ENCODE measurements at regions of chr6 and their contacts with region 1.

Region 1: DNA sequence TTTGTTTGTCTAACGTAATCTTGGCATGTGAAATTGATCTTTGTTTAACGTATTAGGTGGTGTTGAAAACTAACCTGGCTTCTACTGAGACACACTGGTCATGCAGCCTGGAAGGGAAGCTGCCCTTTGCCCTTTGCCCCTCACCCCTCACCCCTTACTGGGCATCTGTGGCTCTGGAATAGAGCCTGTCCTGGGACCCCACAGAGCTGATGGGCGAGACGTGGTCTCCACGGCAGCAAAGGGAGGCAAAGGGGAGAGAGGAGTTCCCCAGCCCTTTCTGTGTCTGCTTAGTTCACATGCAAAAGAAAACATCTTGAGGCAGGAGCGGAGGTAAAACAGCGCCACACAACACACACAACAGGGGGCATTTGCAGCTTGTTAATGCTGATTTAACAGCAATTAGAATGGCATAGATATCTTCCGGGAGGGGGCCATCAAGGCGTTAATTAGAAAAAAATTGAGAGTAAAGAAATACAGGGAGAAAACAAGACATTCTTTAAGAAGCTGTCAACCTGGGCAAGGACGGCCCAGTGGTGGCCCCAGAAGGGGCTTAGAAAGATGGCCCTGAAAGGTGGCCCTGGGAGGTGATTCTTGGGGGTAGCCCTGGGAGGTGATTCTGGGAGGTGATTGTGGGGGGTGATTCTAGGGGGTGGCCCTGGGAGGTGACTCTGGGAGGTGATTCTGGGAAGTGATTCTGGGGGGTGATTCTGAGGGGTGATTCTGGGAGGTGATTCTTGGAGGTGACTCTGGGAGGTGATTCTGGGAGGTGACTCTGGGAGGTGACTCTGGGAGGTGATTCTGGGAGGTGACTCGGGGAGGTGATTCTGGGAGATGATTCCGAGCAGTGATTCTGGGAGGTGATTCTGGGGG is 44.5 kb upstream of the DACT2 start:
- DNase-seq: no peak
- H3K4me3 ChIP-seq: no peak overlapping the region
- H3K4me3 Mint-ChIP-seq: no peak overlapping the region
- H3K27ac Mint-ChIP-seq: no peak overlapping the region
- H3K4me1 ChIP-seq: no peaks in the 10 kb centered on the region
- H3K4me1 Mint-ChIP-seq: no peaks in the 10 kb centered on the region
- H3K27me3 ChIP-seq: no peaks in the 10 kb centered on the region
- H3K27me3 Mint-ChIP-seq: no peaks in the 10 kb centered on the region
- CTCF ChIP-seq: no peak

Region 2: DNA sequence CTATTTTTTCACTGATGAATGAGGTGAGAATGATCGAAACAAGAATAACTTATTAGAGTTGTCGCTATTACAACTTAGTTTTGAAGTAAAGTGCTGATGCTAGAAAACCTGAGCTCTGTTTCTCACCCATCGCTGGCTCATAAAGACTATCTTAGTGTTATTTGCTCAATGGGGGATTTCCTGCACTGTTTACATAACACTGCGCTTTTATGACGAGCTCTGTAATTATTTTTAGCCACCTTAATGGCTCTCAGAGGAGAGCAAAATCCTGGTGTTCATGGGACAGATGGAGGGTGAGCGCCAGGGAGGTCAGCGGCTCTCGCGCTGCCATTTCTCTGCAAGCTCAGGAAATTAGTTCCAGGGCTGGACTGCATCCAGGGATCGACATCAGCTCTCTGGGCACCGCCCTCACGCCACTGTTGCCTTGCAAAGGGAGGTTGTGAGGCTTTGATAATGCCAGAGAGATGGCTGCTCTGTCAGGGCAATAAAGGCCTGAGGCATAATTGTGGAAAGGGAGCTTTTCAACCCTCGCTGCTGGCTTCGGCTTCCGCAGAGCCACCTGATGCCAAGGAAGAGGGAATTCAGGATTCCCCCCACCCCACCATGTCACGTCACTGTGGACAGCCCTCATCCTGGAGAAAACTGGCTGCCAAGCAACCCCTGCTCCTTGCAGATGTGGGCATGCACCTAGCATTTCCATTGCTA is 116.5 kb before region 1 on chr6:
- CTCF ChIA-PET with region 1: interaction called, 17 read pairs
- POLR2A ChIA-PET with region 1: no interaction called
- intact Hi-C with region 1: no loop called
- DNase-seq: no peak
- H3K4me3 ChIP-seq: no peak overlapping the region
- H3K4me3 Mint-ChIP-seq: peak overlapping the region; percentile 20
- H3K27ac Mint-ChIP-seq: no peak overlapping the region
- H3K4me1 ChIP-seq: peaks cover 31% of the 10 kb centered on the region
- H3K4me1 Mint-ChIP-seq: peaks cover 15% of the 10 kb centered on the region
- H3K27me3 ChIP-seq: no peaks in the 10 kb centered on the region
- H3K27me3 Mint-ChIP-seq: no peaks in the 10 kb centered on the region
- CTCF ChIP-seq: no peak

Region 3: DNA sequence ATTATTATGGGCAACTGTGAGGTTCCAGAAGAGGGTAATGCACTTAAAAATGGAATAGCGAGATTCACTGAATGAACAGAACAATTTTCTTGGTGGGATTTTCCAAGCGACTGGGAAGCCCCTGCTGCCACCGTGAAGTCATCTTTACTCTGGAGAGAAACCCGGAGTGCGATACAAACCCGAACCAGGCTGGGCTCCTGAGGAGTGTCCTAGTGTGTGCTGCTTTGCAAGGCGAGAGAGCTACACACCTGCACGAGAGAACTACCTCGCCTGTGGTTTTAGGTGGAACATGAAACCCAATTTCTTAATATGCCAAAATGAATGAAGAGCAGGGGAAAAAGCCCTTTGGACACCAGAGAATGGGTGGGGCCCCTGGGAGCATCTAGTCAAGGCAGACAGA is 11.0 kb before region 1 on chr6:
- CTCF ChIA-PET with region 1: no interaction called
- POLR2A ChIA-PET with region 1: no interaction called
- intact Hi-C with region 1: no loop called
- DNase-seq: no peak
- H3K4me3 ChIP-seq: no peak overlapping the region
- H3K4me3 Mint-ChIP-seq: no peak overlapping the region
- H3K27ac Mint-ChIP-seq: no peak overlapping the region
- H3K4me1 ChIP-seq: no peaks in the 10 kb centered on the region
- H3K4me1 Mint-ChIP-seq: no peaks in the 10 kb centered on the region
- H3K27me3 ChIP-seq: no peaks in the 10 kb centered on the region
- H3K27me3 Mint-ChIP-seq: no peaks in the 10 kb centered on the region
- CTCF ChIP-seq: no peak

Region 4: DNA sequence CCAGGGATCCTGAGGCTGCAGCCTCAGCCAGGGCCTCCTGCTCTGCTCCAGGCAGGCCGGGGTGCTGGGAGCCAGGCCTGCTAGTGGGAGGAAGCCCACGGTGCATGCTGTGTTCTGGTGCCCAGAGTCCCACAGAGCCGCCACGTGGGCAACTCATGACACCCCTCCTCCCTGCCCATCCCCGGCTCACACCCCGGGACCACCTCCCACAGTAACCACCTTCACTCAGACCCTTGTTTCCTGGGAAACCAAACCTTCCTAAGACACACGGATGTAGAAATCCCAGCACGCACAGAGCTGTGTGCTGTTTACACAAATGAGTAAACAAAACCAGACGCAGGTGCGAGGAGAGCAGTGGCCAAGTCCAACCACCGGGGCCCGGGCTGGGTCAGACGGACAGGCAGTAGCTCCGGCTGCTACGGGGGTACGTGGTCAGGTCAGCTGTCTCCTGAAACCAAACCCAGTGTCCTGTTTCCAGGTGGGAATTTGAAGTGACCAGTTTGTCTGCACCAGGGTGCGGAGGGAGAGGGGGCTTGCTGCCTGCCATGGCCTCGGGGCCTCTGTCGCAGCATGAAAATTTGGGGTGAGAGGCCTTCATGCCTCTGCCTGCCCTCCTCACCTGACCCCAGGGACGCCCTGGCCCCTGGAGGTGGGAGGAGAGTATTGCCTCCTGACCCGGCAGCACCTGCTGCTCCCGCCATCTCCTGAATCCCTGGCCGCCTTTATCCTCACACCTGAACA is 24.8 kb after region 1 on chr6:
- CTCF ChIA-PET with region 1: no interaction called
- POLR2A ChIA-PET with region 1: no interaction called
- intact Hi-C with region 1: no loop called
- DNase-seq: peak in 1 of 2 experiments; percentile 60
- H3K4me3 ChIP-seq: no peak overlapping the region
- H3K4me3 Mint-ChIP-seq: no peak overlapping the region
- H3K27ac Mint-ChIP-seq: no peak overlapping the region
- H3K4me1 ChIP-seq: peaks cover 5% of the 10 kb centered on the region; the same call in 1 of the 2 replicates
- H3K4me1 Mint-ChIP-seq: no peaks in the 10 kb centered on the region
- H3K27me3 ChIP-seq: no peaks in the 10 kb centered on the region
- H3K27me3 Mint-ChIP-seq: no peaks in the 10 kb centered on the region
- CTCF ChIP-seq: no peak

Region 5: GRCh38 chr6:168428052-168428826 is 64.2 kb after region 1 on chr6:
- CTCF ChIA-PET with region 1: no interaction called
- POLR2A ChIA-PET with region 1: no interaction called
- intact Hi-C with region 1: no loop called
- DNase-seq: no peak
- H3K4me3 ChIP-seq: no peak overlapping the region
- H3K4me3 Mint-ChIP-seq: no peak overlapping the region
- H3K27ac Mint-ChIP-seq: no peak overlapping the region
- H3K4me1 ChIP-seq: no peaks in the 10 kb centered on the region
- H3K4me1 Mint-ChIP-seq: no peaks in the 10 kb centered on the region
- H3K27me3 ChIP-seq: no peaks in the 10 kb centered on the region
- H3K27me3 Mint-ChIP-seq: peaks cover 9% of the 10 kb centered on the region
- CTCF ChIP-seq: no peak

Measured in Caco-2 (cell line).